IMR-90 (cell line): ENCODE measurements at regions of chr2 and their contacts with region 1.

Region 1: GRCh38 chr2:133063775-133064174 is 393.8 kb upstream of the LYPD1 start:
- DNase-seq: peak; percentile 72
- ATAC-seq: peak; percentile 58; the same call in 1 of the 2 replicates
- H3K4me3 ChIP-seq: no peak overlapping the region
- H3K27ac ChIP-seq: no peak overlapping the region
- H3K4me1 ChIP-seq: peaks cover 2% of the 10 kb centered on the region; the same call in 1 of the 2 replicates
- H3K27me3 ChIP-seq: no peaks in the 10 kb centered on the region
- CTCF ChIP-seq: no peak
- POLR2A ChIP-seq: no peak
- RAD21 ChIP-seq: no peak

Region 2: DNA sequence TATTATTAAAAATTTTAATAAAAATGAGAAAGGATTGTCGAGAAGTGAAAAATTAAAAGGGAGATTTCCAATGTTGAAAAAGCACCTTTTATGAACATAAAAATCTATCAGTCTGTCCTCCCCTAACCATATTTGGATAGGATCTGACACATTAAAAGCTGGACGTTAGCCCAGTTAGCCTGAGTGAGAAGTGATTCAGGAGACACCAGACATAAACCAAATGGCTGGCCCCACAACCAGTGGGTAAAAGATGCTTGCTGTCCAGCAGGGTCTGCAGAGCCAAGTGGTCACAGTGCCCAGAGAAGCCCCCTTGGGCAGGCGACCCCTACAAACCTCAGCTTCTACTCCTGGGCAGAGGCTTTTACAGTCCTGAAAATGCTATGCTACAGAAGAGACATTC is 140.0 kb before region 1 on chr2:
- CTCF ChIA-PET with region 1: no interaction called
- POLR2A ChIA-PET with region 1: no interaction called
- dilution Hi-C with region 1: no loop called
- in situ Hi-C with region 1: no loop called
- intact Hi-C with region 1: loop called (anchors 10 kb)
- DNase-seq: peak; percentile 92
- ATAC-seq: peak; percentile 96
- H3K4me3 ChIP-seq: no peak overlapping the region
- H3K27ac ChIP-seq: no peak overlapping the region
- H3K4me1 ChIP-seq: peaks cover 5% of the 10 kb centered on the region
- H3K27me3 ChIP-seq: no peaks in the 10 kb centered on the region
- CTCF ChIP-seq: no peak
- POLR2A ChIP-seq: no peak
- RAD21 ChIP-seq: 0 out of 2 replicates have a peak, but pooled peaks have one; percentile 5